ENCODE measurements at regions of chr2 and their contacts with region 1.

Region 1: GRCh38 chr2:238370823-238371372 is 50.6 kb downstream of the TRAF3IP1 start:
- DNase-seq: peak; percentile 48
- ATAC-seq: peak; percentile 82
- H3K4me3 Mint-ChIP-seq: no peak overlapping the region
- H3K27ac Mint-ChIP-seq: no peak overlapping the region
- H3K4me1 Mint-ChIP-seq: no peaks in the 10 kb centered on the region
- H3K27me3 Mint-ChIP-seq: no peaks in the 10 kb centered on the region
- CTCF ChIP-seq: 0 out of 2 replicates have a peak, but pooled peaks have one; percentile 23

Region 2: GRCh38 chr2:238420878-238421694 is 50.2 kb after region 1 on chr2:
- CTCF ChIA-PET with region 1: interaction called, 10 read pairs
- POLR2A ChIA-PET with region 1: no interaction called
- DNase-seq: no peak
- ATAC-seq: peak; percentile 60
- H3K4me3 Mint-ChIP-seq: no peak overlapping the region; the same call in 1 of the 2 replicates
- H3K27ac Mint-ChIP-seq: peak overlapping the region; percentile 76; the same call in 1 of the 2 replicates
- H3K4me1 Mint-ChIP-seq: peaks cover 29% of the 10 kb centered on the region
- H3K27me3 Mint-ChIP-seq: no peaks in the 10 kb centered on the region
- CTCF ChIP-seq: no peak

Region 3: GRCh38 chr2:238433941-238434845 is 63.3 kb after region 1 on chr2:
- CTCF ChIA-PET with region 1: interaction called, 61 read pairs
- POLR2A ChIA-PET with region 1: no interaction called
- DNase-seq: no peak
- ATAC-seq: no peak
- H3K4me3 Mint-ChIP-seq: no peak overlapping the region
- H3K27ac Mint-ChIP-seq: no peak overlapping the region
- H3K4me1 Mint-ChIP-seq: no peaks in the 10 kb centered on the region
- H3K27me3 Mint-ChIP-seq: no peaks in the 10 kb centered on the region
- CTCF ChIP-seq: no peak

Region 4: GRCh38 chr2:238459081-238459629 is 88.3 kb after region 1 on chr2:
- CTCF ChIA-PET with region 1: interaction called, 23 read pairs
- POLR2A ChIA-PET with region 1: no interaction called
- DNase-seq: no peak
- ATAC-seq: no peak
- H3K4me3 Mint-ChIP-seq: no peak overlapping the region
- H3K27ac Mint-ChIP-seq: no peak overlapping the region
- H3K4me1 Mint-ChIP-seq: no peaks in the 10 kb centered on the region
- H3K27me3 Mint-ChIP-seq: peaks cover 6% of the 10 kb centered on the region; the same call in 1 of the 2 replicates
- CTCF ChIP-seq: no peak

Region 5: DNA sequence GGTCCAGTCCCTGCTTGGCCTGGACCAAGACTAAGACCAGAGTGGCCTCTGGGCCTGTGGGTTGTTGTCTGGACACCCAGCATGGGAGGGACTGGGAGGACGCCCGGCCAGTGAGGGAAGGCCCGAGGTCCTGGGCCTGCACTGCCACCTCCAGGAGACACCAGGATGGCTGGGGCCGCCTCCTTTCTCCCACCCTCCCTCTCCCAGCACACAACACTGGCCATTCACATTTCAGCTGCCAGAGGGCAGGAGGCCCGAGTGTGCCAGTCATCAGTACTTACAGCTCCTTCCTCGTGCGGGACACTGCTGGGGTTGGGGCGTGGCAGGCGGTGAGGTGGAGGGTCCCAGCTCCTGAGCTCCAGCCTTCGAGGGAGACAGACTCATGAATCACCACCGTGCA is 189.3 kb after region 1 on chr2:
- CTCF ChIA-PET with region 1: interaction called, 10 read pairs
- POLR2A ChIA-PET with region 1: no interaction called
- DNase-seq: peak; percentile 56
- ATAC-seq: peak; percentile 84
- H3K4me3 Mint-ChIP-seq: no peak overlapping the region
- H3K27ac Mint-ChIP-seq: no peak overlapping the region
- H3K4me1 Mint-ChIP-seq: no peaks in the 10 kb centered on the region
- H3K27me3 Mint-ChIP-seq: no peaks in the 10 kb centered on the region; the same call in 1 of the 2 replicates
- CTCF ChIP-seq: no peak

Region 6: DNA sequence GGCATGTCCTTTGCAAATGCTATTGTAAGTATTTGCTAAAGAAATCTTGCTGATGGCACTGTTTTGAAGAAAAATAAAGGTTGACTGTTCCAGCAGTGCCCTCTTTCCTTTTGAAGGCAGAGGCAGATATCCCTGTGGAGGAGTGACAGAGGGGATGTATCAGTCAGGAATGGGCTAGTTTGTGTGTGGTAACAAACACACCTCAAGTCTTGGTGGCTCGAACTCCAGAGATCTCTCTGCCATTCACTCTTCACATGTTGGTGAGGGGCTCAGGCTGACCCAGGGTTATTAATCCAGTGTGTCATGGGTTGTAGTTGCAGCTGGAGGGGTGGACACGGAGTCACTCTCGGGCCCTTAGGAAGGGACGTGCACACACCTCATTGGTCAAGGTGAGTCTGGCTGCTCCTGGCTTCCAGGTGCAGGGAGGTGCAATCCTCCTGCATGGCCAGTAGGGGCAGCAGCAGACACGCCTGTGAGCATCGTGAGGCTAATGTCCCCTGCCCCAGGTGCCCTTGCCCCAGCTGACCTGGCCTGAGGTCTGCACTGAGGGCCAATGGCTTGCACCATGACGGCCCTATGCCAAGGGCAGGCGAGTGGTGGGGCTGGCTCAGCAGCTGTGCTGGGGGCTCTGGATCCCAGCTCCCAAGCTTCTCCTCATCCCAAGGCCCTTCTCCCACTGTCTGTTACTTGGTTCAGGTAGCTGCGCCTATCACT is 202.3 kb after region 1 on chr2:
- CTCF ChIA-PET with region 1: interaction called, 12 read pairs
- POLR2A ChIA-PET with region 1: no interaction called
- DNase-seq: peak; percentile 66
- ATAC-seq: peak; percentile 89
- H3K4me3 Mint-ChIP-seq: no peak overlapping the region
- H3K27ac Mint-ChIP-seq: no peak overlapping the region
- H3K4me1 Mint-ChIP-seq: no peaks in the 10 kb centered on the region
- H3K27me3 Mint-ChIP-seq: no peaks in the 10 kb centered on the region
- CTCF ChIP-seq: peak; percentile 93